ENCODE measurements at regions of chr16 and their contacts with region 1.

Region 1: GRCh38 chr16:17465460-17465859 is 5.3 kb downstream of the XYLT1 start:
- DNase-seq: no peak
- ATAC-seq: no peak
- H3K4me3 ChIP-seq: no peak overlapping the region
- H3K4me3 Mint-ChIP-seq: no peak overlapping the region
- H3K27ac ChIP-seq: no peak overlapping the region
- H3K27ac Mint-ChIP-seq: no peak overlapping the region
- H3K4me1 ChIP-seq: peaks cover 16 to 44% of the 10 kb centered on the region in 2 experiments
- H3K4me1 Mint-ChIP-seq: peaks cover 77 to 83% (median 77%) of the 10 kb centered on the region in 3 donors
- H3K27me3 ChIP-seq: no peaks in the 10 kb centered on the region
- H3K27me3 Mint-ChIP-seq: no peaks in the 10 kb centered on the region

Region 2: DNA sequence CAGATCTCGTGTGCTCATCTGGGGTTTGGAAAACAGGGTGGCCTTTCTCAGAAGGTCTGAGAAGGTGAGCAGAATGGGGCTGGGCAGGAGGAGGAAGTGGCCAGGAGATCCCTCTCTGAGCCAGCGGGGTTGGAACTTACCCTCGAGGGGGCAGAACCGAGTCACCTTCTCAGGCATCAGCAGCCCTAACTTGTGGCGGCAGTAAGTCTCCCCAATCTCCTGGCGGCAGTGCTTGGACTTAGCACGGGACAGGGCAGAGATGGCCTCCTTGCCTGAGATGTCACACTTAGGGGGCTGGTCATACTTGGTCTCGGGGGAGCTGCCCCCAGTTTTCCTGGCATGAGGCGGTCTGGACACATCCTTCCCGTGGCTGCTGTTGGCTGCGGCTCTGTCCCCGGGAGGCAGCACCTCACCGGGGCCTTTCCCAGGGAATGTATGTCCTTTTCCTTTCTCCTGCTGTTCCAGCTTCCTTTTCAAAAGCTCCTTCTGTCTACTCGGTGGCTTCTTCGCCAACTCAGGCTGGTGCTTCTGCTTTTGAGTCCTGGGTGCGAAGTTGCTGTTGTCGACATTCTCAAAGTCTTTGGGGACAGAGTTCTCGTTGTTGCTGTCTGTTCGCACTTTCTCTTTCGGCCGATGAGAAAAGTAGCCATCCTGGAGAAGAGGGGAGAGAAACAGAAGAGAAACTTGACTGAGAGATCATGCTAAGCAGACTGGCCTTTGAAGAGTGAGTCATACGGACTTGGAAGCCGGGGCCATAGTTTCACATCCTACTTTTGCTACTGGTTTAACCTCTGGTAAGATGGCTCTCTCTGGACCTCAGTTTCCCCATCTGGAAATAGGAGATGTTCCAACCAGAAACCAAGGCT is 206.4 kb before region 1 on chr16:
- CTCF ChIA-PET with region 1: no interaction called
- POLR2A ChIA-PET with region 1: no interaction called
- DNase-seq: peak in 1 of 35 experiments; percentile 4
- ATAC-seq: no peak
- H3K4me3 ChIP-seq: no peak overlapping the region
- H3K4me3 Mint-ChIP-seq: no peak overlapping the region
- H3K27ac ChIP-seq: no peak overlapping the region
- H3K27ac Mint-ChIP-seq: no peak overlapping the region
- H3K4me1 ChIP-seq: peaks cover 0 to 10% of the 10 kb centered on the region in 2 experiments
- H3K4me1 Mint-ChIP-seq: peaks cover 37 to 44% (median 39%) of the 10 kb centered on the region in 3 donors
- H3K27me3 ChIP-seq: no peaks in the 10 kb centered on the region
- H3K27me3 Mint-ChIP-seq: no peaks in the 10 kb centered on the region

Region 3: GRCh38 chr16:17454162-17454725 is 11.2 kb before region 1 on chr16:
- CTCF ChIA-PET with region 1: interaction called in 1 of 2 experiments, 3 read pairs
- POLR2A ChIA-PET with region 1: interaction called, 3 to 14 read pairs
- DNase-seq: no peak
- ATAC-seq: no peak
- H3K4me3 ChIP-seq: no peak overlapping the region
- H3K4me3 Mint-ChIP-seq: no peak overlapping the region
- H3K27ac ChIP-seq: no peak overlapping the region
- H3K27ac Mint-ChIP-seq: no peak overlapping the region
- H3K4me1 ChIP-seq: peaks cover 13 to 27% of the 10 kb centered on the region in 2 experiments
- H3K4me1 Mint-ChIP-seq: peaks cover 42 to 49% (median 48%) of the 10 kb centered on the region in 3 donors
- H3K27me3 ChIP-seq: no peaks in the 10 kb centered on the region
- H3K27me3 Mint-ChIP-seq: no peaks in the 10 kb centered on the region

Measured in T-cell (primary cell).